Adrenal gland (tissue), 19 donors: ENCODE measurements at regions of chrX and their contacts with region 1.

Region 1: GRCh38 chrX:135060697-135061096 is 8.8 kb upstream of the RTL8A start:
- DNase-seq: no peak
- H3K4me3 ChIP-seq: no peak overlapping the region
- H3K27ac ChIP-seq: no peak overlapping the region
- H3K4me1 ChIP-seq: no peaks in the 10 kb centered on the region
- H3K27me3 ChIP-seq: peaks cover 3% of the 10 kb centered on the region
- CTCF ChIP-seq: no peak
- POLR2A ChIP-seq: no peak

Region 2: GRCh38 chrX:134502686-134503085 is 558.0 kb before region 1 on chrX:
- intact Hi-C with region 1: loop called in 1 of 2 experiments (anchors 10 kb)
- DNase-seq: no peak
- H3K4me3 ChIP-seq: no peak overlapping the region
- H3K27ac ChIP-seq: no peak overlapping the region
- H3K4me1 ChIP-seq: no peaks in the 10 kb centered on the region
- H3K27me3 ChIP-seq: no peaks in the 10 kb centered on the region
- CTCF ChIP-seq: no peak
- POLR2A ChIP-seq: no peak